Activated T-helper 2 cell treated with anti-CD3 and anti-CD28 coated beads, Interferon-gamma antibody, Interleukin-2, Interleukin-4, amounts not matched to agents 10 μg/mL and 5 μg/mL and 100 μg/mL, durations not matched to agents 14 hours and 24 hours and 36 hours (primary cell): ENCODE measurements at regions of chr9 and their contacts with region 1.

Region 1: DNA sequence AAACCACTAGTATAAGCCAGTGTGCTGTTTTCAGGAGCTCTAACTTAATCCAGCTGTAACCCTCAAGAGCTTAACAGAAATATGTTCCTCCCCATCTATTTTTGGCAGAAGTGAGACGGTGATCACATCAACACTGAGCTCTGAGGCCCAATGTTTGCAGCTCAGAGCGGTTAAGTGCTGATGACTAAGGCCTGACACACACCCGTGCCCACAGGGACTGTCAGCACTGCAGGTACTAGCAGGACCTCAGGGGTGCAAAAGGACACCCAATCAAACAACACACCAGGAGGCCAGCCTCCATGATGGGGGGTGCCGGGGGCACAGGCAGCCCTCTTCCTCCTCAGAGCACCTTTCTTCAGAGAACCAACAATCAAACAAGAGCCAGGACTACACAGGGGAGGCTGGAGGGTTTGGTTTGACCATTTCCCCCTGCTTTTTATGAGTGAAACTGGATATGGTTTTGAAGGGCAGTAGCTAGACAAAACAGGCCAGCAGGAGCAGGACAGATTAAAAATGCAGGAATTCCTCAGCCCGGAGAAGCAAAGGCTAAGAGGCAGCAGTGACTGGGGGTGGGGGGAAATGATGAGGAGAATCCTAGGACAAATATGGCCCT is 61.3 kb downstream of the RAPGEF1 start:
- DNase-seq: peak; percentile 73
- H3K4me3 Mint-ChIP-seq: peak overlapping the region; percentile 69
- H3K27ac Mint-ChIP-seq: peak overlapping the region; percentile 96
- H3K4me1 Mint-ChIP-seq: peaks cover 80% of the 10 kb centered on the region
- H3K27me3 Mint-ChIP-seq: no peaks in the 10 kb centered on the region

Region 2: DNA sequence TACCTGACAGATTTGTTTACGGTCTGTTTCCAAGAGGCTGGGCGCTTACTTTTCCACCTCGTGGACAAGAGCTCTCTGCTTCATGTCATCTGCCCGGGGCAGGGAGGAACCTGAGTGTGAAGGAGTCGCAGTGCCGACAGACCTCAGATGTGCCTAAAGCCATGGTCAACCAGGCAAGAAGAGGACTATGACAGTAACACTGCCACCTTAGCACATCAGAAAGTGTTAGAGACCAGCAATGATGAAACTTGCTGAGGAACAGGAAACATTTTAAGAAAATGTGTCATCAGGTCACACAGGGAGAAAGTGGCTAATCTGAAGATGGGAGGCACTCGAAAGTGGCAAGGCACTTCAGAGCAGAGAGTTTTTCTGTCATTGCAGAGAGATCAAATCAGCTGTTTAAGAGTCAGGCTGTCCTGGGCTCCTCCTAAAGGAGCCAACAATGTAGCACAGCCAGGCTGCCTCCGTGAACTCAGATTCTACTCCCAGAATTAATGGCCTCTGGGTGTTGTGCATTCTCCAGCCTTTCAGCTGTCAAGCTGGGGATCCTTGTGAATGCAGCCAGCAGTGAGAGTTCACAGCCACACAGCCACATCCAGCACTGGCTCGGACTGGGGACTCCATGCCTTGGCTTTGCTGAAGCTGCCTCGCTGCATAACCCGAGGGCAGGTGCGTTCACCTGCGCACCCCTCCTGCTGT is 33.4 kb before region 1 on chr9:
- intact Hi-C with region 1: loop called (anchors 1 kb)
- DNase-seq: no peak
- H3K4me3 Mint-ChIP-seq: no peak overlapping the region
- H3K27ac Mint-ChIP-seq: peak overlapping the region; percentile 86
- H3K4me1 Mint-ChIP-seq: peaks cover 52% of the 10 kb centered on the region
- H3K27me3 Mint-ChIP-seq: no peaks in the 10 kb centered on the region

Region 3: DNA sequence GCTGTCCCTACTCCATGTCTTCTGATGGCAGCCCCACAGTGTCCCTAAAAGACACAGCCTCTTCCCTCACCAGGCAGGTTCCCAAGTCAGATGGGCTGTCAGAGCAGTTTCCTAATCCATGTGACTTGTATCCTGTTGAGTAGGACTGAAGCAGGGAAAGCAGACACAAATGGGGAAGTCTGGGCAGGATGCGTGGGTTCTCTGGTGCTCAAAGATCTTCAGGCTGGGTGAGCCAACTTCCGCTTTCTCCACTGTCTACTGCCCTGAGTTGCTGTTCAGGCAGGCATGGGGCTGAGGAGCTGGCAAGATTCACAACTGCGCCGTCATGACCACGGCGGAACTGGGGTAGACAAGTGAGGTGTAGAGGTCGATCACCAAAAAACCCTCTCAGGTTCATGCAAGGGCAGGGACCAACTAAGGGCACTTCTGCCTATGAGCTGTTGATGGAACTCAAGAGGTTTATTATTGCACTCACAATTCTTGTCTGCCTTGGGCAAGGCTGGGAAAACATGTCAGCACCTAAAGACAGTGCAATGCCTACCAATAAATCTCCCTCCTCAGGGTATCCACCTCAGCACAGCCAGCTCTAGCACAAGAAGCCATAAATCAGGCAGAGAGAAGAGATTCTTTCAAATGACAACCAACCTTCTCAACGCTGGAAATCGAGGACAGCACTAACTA is 22.1 kb before region 1 on chr9:
- intact Hi-C with region 1: loop called (anchors 2 kb)
- DNase-seq: peak; percentile 55
- H3K4me3 Mint-ChIP-seq: peak overlapping the region; percentile 28
- H3K27ac Mint-ChIP-seq: peak overlapping the region; percentile 89
- H3K4me1 Mint-ChIP-seq: peaks cover 61% of the 10 kb centered on the region
- H3K27me3 Mint-ChIP-seq: no peaks in the 10 kb centered on the region

Region 4: DNA sequence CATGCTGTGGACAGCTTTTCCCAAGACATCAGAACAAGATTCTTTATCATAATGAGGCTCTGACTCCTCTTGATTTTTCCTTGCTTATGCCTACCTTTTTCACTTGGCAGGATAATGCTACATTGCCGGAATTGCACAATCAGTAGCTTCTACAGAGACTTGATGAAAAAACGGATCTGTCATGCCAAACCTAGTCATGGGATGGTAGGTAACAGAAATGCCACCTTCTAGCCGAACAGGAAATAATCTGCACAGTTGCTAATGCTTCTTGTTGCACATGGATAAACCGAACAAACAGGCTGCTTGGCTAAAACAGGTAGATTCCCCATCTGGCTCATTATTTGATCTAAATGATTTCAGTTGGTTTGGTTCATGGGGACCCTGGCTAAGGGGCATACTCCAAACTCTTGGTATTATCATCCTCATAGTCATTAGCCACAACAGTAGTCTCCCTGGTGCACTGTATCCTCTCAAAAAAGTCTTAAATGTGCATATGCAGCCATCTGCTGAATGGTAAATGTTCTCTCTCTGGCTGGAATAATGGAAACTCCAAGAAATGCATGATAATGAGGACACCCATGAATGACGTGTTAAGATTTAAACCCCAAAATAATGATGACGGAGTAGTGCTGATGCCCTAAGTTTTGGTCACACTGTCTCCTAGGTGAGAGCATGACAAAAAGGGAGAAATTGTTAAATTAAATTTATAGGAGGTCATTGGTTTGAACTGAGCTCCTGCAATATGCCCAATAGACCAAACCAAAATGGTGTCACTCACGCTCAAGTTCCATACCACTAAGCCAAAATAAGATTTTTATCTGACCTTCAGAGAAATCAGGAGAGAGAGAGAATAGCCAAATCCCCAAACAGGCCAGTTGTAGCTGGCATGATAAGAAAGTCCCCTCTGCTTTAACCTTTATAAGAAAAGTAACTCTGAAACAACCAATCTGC is 14.3 kb after region 1 on chr9:
- intact Hi-C with region 1: loop called (anchors 1 kb)
- DNase-seq: no peak
- H3K4me3 Mint-ChIP-seq: no peak overlapping the region
- H3K27ac Mint-ChIP-seq: peak overlapping the region; percentile 25
- H3K4me1 Mint-ChIP-seq: peaks cover 81% of the 10 kb centered on the region
- H3K27me3 Mint-ChIP-seq: no peaks in the 10 kb centered on the region